ENCODE measurements at regions of chr16 and their contacts with region 1.

Region 1: GRCh38 chr16:82229796-82230619 is 60.0 kb upstream of the MPHOSPH6 start:
- DNase-seq: peak; percentile 79
- H3K4me3 Mint-ChIP-seq: no peak overlapping the region
- H3K27ac Mint-ChIP-seq: no peak overlapping the region
- H3K4me1 Mint-ChIP-seq: no peaks in the 10 kb centered on the region
- H3K27me3 Mint-ChIP-seq: peaks cover 16% of the 10 kb centered on the region

Region 2: DNA sequence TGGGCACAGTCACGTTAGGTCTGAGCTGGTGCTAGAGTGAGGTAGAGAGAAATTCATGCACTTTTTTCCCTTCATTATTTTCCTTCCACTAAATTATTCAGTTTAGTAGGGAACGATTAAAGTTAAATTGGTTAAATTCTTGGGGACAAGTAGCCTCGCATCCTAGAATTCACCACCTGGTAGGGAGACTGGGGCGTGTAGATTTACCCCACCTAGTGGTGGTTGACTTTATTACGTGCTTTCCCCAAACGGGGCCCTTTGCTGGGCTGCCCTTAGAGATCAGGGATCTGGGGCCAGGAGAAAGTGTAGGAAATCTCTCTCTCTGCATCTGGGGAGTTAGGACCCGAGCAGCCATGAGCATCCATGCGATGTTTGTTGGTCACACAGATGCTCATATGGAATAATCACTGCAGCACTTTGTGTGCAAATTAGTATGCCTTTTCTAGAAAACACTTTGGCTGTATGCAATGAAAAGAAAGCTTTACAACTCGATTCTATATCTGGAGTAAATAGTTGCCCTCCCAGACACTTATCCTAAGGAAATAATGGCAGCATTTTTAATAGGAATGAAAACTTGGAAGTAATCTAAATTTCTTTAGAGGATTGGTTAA is 343.9 kb before region 1 on chr16:
- CTCF ChIA-PET with region 1: interaction called, 6 read pairs
- intact Hi-C with region 1: loop called (anchors 1 kb)
- DNase-seq: peak; percentile 35
- H3K4me3 Mint-ChIP-seq: no peak overlapping the region
- H3K27ac Mint-ChIP-seq: no peak overlapping the region
- H3K4me1 Mint-ChIP-seq: no peaks in the 10 kb centered on the region
- H3K27me3 Mint-ChIP-seq: no peaks in the 10 kb centered on the region

Region 3: DNA sequence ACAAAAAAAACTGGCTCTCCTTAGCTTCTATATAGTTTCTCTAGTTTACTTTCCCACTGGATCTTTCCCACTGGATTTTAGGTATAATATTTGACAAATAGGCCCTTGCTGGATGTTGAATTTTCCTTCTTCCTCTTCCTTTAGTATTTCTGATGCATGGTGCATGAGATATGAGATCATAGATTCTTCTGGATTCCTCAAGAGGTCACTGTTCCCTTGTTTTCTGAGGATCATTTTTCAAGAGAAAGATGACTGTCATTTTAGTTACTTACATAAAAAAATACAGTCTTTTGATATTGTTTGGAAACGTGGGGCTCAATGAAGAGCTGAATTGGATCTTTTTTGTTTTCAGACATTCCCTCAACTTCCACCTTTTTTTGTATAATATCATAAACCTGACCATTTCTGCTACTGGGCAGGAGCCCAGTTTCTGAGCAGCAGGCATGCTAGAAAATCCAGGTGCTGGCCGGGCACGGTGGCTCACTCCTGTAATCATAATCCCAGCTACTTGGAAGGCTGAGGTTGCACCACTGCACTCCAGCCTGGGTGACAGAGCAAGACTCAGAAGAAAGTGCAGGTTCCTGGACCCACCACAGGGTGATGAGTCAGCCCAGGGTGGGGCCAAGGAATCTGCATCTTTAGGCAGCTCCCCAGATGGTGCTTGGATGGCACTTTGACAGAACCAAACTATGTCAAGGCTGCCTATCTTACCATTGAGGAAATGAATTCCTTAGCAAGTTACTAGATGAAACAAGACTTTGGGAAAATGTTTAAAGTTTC is 289.0 kb before region 1 on chr16:
- CTCF ChIA-PET with region 1: interaction called, 24 read pairs
- intact Hi-C with region 1: loop called (anchors 1 kb)
- DNase-seq: no peak
- H3K4me3 Mint-ChIP-seq: no peak overlapping the region
- H3K27ac Mint-ChIP-seq: no peak overlapping the region
- H3K4me1 Mint-ChIP-seq: no peaks in the 10 kb centered on the region
- H3K27me3 Mint-ChIP-seq: peaks cover 1% of the 10 kb centered on the region

Region 4: DNA sequence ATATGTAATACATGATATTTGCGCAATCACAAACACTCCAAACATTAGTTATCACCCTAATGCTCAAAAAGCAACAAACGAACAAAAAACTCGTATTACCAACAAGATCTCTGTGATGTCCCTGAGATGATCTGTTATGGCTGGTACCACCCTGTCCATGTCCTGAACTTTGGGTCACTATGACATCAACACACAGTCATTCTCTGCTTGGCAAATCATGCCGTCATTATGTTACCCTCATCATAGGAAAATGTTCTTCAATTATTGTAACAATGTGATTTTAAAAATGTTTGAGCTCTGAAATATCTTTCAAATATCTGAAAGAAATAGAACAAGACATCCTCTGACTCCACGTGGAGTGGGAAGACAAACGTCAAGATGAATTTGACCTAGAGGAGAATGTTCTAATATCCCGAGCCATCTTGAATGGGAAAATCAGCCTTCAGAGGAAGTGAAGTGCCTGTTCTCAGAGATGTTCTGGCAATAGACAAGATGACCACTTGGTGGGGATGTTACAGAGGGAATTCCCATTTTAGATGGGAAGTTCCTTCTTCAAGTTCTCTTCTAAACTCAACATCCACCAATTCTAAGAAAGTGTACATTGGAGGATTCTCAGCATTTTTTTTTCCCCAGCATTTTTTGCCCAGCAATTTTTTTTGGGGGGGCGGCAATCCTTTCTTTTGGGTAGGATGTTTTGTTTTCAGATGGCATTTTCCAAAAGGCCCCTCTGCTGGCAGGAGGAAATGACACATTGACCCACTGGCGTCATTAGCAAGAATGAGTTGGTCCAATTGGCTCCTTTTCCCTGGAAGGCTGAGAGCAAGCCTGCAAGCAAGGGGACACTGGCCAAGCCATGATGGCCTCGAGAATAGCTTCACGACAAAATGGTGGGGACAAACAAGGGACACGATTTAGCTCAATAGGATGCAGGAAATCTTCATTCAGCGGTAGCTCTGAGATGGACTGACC is 198.6 kb before region 1 on chr16:
- CTCF ChIA-PET with region 1: no interaction called
- intact Hi-C with region 1: loop called (anchors 2 kb)
- DNase-seq: no peak
- H3K4me3 Mint-ChIP-seq: no peak overlapping the region
- H3K27ac Mint-ChIP-seq: no peak overlapping the region
- H3K4me1 Mint-ChIP-seq: no peaks in the 10 kb centered on the region
- H3K27me3 Mint-ChIP-seq: peaks cover 7% of the 10 kb centered on the region

Region 5: GRCh38 chr16:82169861-82170845 is 59.9 kb before region 1 on chr16 and contains the start of gene MPHOSPH6:
- CTCF ChIA-PET with region 1: interaction called, 5 read pairs
- intact Hi-C with region 1: loop called (anchors 2 kb)
- DNase-seq: peak; percentile 90
- H3K4me3 Mint-ChIP-seq: peak within 1 kb of the TSS; percentile 93
- H3K27ac Mint-ChIP-seq: peak within 1 kb of the TSS; percentile 90
- H3K4me1 Mint-ChIP-seq: peaks cover 22% of the 10 kb centered on the region
- H3K27me3 Mint-ChIP-seq: peaks cover 23% of the 10 kb centered on the region
- total RNA-seq, gene MPHOSPH6: 34.8 to 36.9 TPM

Region 6: GRCh38 chr16:82240111-82240510 is 10.1 kb after region 1 on chr16:
- CTCF ChIA-PET with region 1: interaction called, 13 read pairs
- intact Hi-C with region 1: no loop called
- DNase-seq: no peak
- H3K4me3 Mint-ChIP-seq: no peak overlapping the region
- H3K27ac Mint-ChIP-seq: no peak overlapping the region
- H3K4me1 Mint-ChIP-seq: no peaks in the 10 kb centered on the region
- H3K27me3 Mint-ChIP-seq: peaks cover 19% of the 10 kb centered on the region

Region 7: DNA sequence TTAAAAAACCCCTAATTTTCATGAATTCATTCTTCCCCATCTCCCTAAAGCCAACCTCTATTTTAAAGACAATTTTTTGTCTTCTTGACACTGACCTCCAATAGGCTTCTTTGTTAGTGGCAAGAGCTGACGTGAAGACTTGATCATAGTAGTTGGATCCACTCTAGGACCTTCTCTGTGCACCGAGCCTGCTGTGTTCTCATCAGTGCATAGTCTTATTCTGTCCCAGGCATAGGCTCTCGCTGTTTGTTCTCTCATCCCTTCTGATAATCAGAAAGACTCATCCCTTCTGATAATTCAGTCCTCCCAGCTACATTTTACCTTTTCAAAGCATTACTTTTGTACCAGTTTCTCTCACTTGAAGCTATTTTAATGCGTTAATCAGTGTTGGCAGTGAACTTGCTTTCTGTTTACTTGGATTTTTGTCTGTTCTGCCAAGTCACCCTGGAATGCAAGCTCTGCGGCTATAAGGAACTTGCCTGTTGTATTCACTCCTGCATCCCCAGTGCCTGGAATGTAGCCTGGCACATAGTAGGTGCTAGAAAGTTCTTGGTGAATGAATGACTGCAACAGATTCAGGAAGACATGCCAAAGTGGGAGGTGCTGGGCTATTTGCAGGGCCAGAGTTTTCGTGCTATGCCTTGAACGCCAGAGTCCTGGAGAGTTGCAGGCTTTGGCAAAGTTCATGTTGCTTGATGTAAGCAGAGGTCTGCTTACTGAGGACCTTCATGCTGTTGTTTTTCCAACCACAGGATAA is 87.6 kb after region 1 on chr16:
- CTCF ChIA-PET with region 1: no interaction called
- intact Hi-C with region 1: no loop called
- DNase-seq: no peak
- H3K4me3 Mint-ChIP-seq: no peak overlapping the region
- H3K27ac Mint-ChIP-seq: no peak overlapping the region
- H3K4me1 Mint-ChIP-seq: no peaks in the 10 kb centered on the region
- H3K27me3 Mint-ChIP-seq: peaks cover 4% of the 10 kb centered on the region

Region 8: DNA sequence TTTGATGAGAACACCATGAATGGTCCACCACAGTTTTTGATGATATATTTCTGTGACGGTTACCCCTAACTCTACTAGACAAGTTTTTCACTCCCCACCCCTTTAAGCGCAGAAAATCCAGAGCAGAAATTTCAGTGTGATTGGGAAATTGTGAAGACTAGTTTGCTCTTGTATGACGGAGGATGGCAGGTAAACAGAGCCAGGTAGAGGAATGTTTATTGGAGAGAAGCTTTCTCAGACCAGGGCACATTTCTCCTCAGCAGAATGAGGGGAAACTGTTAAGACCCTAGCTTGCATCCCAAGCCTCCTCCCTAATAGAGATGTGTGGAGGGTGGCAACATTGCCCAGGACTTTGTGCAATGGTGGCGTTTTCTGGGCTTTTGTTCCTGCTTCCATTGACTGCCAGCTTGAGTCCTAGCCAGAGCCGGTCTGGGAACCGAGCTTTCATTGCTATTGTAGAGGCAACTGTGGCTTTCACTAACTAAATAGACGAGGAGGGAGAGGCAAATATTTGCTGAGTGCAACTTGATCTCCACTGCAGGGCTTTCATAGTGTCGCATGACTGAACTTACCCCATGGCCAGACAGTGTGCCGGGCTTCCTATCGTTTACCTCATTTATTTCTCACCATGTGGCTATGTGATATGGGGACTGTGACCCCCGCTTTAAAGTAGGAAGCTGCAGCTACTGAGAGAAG is 99.6 kb after region 1 on chr16:
- CTCF ChIA-PET with region 1: no interaction called
- intact Hi-C with region 1: no loop called
- DNase-seq: no peak
- H3K4me3 Mint-ChIP-seq: no peak overlapping the region
- H3K27ac Mint-ChIP-seq: no peak overlapping the region
- H3K4me1 Mint-ChIP-seq: no peaks in the 10 kb centered on the region
- H3K27me3 Mint-ChIP-seq: no peaks in the 10 kb centered on the region